ENCODE measurements at regions of chr11 and their contacts with region 1.

Region 1: GRCh38 chr11:1486114-1486825 is at the start of gene MOB2:
- DNase-seq: no peak
- total RNA-seq, gene MOB2: 48.5 TPM

Region 2: GRCh38 chr11:1437500-1437899 is 48.8 kb before region 1 on chr11:
- intact Hi-C with region 1: loop called (anchors 5 kb)
- DNase-seq: peak; percentile 83

Measured in cardiac septum (tissue), 1 donor.